A673 (cell line): ENCODE measurements at regions of chr20 and their contacts with region 1.

Region 1: DNA sequence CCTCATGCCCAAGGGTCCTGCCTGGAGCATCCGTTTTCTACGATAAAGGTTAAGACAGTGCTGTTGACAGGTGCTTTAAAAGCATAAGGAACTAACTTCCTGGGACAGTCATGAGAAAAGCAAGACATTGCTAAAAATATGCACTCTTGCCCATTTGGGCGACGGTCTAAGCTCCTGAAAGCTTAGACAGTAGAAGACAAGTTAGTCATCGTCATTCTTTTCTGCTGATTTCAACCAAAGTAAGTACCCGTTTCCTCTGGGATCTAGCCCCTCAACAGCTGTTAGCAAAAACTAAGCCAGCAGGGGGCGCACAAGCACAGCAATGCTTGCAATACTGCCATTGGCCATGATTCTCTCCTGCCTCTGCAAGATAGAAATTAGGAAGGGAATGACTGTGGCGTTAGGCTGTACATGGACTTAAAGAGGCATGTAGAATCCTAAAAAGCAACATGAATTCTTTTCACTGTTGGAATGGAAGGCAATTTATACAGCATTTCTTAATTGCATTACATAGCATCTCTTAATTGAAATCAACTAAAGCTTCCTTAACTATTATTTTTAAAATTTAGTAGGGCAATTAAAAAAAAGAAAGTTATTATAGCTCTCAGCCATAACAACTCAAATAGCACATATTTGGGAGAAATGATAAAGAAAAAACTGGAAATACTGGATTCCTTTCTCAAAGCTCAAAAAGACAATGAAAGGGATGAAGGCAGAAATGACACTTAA is 147.8 kb upstream of the RALGAPA2 start:
- DNase-seq: peak; percentile 93
- H3K4me3 ChIP-seq: no peak overlapping the region
- H3K27ac ChIP-seq: no peak overlapping the region
- H3K4me1 ChIP-seq: no peaks in the 10 kb centered on the region
- H3K27me3 ChIP-seq: no peaks in the 10 kb centered on the region
- CTCF ChIP-seq: peak; percentile 97

Region 2: DNA sequence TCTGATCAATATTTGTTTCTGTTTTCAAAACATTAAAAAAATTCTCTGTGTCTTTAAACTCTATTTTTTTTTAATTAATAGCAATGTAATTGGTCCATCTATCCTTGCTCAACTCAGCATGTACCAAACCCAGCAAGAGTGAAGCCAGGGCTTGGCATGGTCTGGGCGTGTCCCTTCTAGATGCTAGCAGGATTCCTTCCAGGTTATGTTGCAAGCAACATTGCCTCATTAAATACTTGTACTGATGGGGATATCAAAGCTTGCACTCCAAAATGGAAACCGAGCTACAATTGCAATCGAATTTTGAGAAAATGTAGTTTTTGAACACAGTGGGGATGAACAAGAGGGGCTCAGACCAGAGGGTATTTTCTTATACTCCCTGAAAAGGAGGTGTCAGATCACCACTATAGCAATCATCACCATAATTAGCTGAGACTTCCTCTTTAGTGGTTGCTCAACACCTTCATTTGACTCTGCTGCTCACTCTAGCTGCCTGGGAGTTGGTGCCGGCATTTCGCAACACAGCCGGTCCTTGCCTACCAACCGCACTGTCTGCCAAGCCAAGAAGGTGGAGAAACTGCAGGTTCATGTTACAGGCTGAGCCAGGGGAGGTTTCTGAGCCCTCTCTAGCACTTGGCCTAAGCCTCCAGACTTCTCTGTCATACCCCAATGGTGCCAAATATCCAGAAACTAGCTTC is 80.0 kb before region 1 on chr20:
- CTCF ChIA-PET with region 1: no interaction called
- POLR2A ChIA-PET with region 1: no interaction called
- intact Hi-C with region 1: no loop called
- DNase-seq: peak; percentile 88
- H3K4me3 ChIP-seq: no peak overlapping the region
- H3K27ac ChIP-seq: no peak overlapping the region
- H3K4me1 ChIP-seq: peaks cover 25% of the 10 kb centered on the region
- H3K27me3 ChIP-seq: no peaks in the 10 kb centered on the region
- CTCF ChIP-seq: no peak

Region 3: DNA sequence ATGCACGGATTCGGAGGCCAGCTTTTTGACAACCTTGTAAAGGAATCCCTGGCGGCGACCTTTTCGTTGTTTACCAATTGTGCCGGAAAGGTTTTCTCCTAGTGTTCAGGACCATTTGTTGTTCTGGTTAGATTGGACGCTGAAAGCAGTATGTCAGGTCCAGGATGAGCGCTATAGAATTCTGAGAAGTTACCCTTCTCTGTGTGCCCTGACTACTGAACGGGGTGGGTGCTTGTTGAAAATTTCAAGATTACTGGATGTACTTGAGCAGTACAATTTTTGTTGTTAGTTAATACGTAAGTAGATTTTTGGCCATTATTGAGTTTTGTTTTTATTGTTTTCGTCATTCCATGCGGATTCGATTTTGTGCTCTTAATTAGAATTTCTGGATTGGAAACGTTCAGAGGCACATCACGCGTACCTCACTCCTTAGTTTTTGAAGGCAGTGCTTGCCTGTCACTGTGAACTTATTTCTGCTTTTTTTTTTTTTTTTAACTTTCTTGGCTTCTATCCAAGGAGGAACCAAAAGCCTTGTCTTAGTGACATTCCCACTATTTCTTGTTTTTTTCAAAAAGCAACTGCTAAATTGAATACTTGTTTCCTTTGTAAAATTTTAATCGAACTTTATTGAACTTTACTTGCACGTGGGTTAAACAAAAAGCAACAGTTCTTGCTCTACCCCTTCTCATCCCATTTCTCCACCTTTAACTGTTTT is 443.8 kb after region 1 on chr20:
- CTCF ChIA-PET with region 1: no interaction called
- POLR2A ChIA-PET with region 1: no interaction called
- intact Hi-C with region 1: no loop called
- DNase-seq: peak; percentile 16
- H3K4me3 ChIP-seq: peak overlapping the region; percentile 86
- H3K27ac ChIP-seq: peak overlapping the region; percentile 98
- H3K4me1 ChIP-seq: peaks cover 6% of the 10 kb centered on the region
- H3K27me3 ChIP-seq: no peaks in the 10 kb centered on the region
- CTCF ChIP-seq: no peak

Region 4: GRCh38 chr20:21395666-21396598 is 535.7 kb after region 1 on chr20:
- CTCF ChIA-PET with region 1: no interaction called
- POLR2A ChIA-PET with region 1: no interaction called
- intact Hi-C with region 1: loop called (anchors 10 kb)
- DNase-seq: no peak
- H3K4me3 ChIP-seq: peak overlapping the region; percentile 37
- H3K27ac ChIP-seq: no peak overlapping the region
- H3K4me1 ChIP-seq: no peaks in the 10 kb centered on the region
- H3K27me3 ChIP-seq: peaks cover 73% of the 10 kb centered on the region
- CTCF ChIP-seq: no peak